B cell (primary cell): ENCODE measurements at regions of chr14 and their contacts with region 1.

Region 1: DNA sequence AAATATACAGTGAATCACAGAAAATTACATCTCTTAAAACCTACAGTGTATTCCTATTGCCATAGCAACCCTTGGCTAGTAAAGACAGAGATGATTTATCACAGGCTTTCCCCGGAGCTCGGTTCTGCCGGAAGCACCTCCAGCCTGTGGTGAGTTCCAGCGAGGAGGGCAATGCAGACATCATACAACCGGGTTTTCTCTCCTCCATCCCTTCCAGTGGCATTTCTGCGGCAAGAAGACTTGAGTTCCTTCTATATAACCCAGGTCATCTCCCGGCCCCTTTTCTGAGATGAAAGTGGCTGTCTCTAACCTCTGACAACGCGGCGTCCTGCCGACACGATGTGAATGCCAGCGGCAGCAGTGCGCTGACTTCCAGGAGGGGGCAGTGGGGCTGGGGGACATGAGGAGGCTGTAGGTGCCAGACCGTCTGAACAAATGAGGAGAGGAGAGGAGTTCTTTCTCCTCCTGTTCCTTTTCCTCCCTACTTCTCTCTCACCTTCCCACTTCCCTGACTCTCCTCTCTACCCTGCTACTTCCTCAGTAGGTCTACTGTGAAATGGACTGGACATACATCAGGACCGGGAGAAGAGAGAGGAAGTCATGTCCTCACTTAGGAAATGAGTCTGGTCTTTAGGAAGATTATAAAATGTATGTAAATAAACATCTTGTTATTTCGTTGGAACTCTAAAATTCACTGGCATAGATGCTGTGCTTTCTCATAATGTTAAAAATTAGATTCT is 68.6 kb upstream of the MAX start:
- DNase-seq: peak; percentile 72
- ATAC-seq: peak; percentile 50
- H3K4me3 ChIP-seq: peak overlapping the region; percentile 42 to 74 (median 64)
- H3K4me3 Mint-ChIP-seq: peak overlapping the region; percentile 86
- H3K27ac ChIP-seq: peak overlapping the region in 1 of 2 donors; percentile 23
- H3K27ac Mint-ChIP-seq: peak overlapping the region; percentile 88
- H3K4me1 ChIP-seq: peaks cover 14 to 35% of the 10 kb centered on the region in 2 donors
- H3K4me1 Mint-ChIP-seq: peaks cover 55% of the 10 kb centered on the region
- H3K27me3 ChIP-seq: no peaks in the 10 kb centered on the region
- H3K27me3 Mint-ChIP-seq: no peaks in the 10 kb centered on the region
- CTCF ChIP-seq: peak; percentile 40

Region 2: DNA sequence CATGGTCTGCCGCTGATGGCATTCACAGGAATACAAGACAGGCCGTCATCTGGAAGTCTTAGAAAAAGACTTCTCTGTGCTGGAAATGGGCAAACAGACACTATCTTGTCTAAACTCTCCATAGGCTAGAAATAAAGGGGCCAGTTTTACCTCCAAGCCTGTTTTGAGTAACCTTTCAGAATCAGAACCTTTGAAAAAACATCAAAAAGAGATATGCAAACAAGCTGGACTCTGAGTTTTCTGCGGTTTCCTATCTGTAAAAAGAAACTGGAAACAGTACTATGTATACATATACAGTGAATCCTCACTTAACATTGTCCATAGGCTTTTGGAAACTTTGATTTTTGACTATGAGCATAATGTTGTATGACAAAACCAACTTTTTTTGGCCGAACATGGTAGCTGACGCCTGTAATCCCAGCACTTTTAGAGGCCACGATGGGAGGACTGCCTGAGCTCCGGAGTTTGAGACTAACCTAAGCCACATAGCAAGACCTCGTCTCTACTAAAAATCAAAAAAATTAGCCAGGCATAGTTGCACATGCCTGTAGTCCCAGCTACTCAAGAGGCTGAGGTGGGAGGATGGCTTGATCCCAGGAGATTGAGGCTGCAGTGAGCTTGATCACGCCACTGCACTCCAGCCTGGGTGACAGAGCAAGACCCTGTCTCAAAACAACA is 24.2 kb after region 1 on chr14:
- CTCF ChIA-PET with region 1: interaction called, 8 read pairs
- POLR2A ChIA-PET with region 1: interaction called, 4 read pairs
- intact Hi-C with region 1: loop called (anchors 2 kb)
- DNase-seq: peak; percentile 36
- ATAC-seq: peak; percentile 76
- H3K4me3 ChIP-seq: peak overlapping the region in 4 of 5 experiments; percentile 0 to 42 (median 28)
- H3K4me3 Mint-ChIP-seq: peak overlapping the region; percentile 84
- H3K27ac ChIP-seq: peak overlapping the region; percentile 29 to 35
- H3K27ac Mint-ChIP-seq: peak overlapping the region; percentile 91
- H3K4me1 ChIP-seq: peaks cover 19 to 23% of the 10 kb centered on the region in 2 donors
- H3K4me1 Mint-ChIP-seq: peaks cover 44% of the 10 kb centered on the region
- H3K27me3 ChIP-seq: no peaks in the 10 kb centered on the region
- H3K27me3 Mint-ChIP-seq: no peaks in the 10 kb centered on the region
- CTCF ChIP-seq: no peak

Region 3: GRCh38 chr14:65222440-65222858 is 51.5 kb after region 1 on chr14:
- CTCF ChIA-PET with region 1: interaction called, 15 read pairs
- POLR2A ChIA-PET with region 1: no interaction called
- intact Hi-C with region 1: no loop called
- DNase-seq: peak; percentile 72
- ATAC-seq: peak; percentile 89
- H3K4me3 ChIP-seq: no peak overlapping the region
- H3K4me3 Mint-ChIP-seq: no peak overlapping the region
- H3K27ac ChIP-seq: no peak overlapping the region
- H3K27ac Mint-ChIP-seq: peak overlapping the region; percentile 39
- H3K4me1 ChIP-seq: peaks cover 42 to 56% of the 10 kb centered on the region in 2 donors
- H3K4me1 Mint-ChIP-seq: peaks cover 49% of the 10 kb centered on the region
- H3K27me3 ChIP-seq: no peaks in the 10 kb centered on the region
- H3K27me3 Mint-ChIP-seq: no peaks in the 10 kb centered on the region
- CTCF ChIP-seq: peak; percentile 87

Region 4: GRCh38 chr14:65709576-65709975 is 538.6 kb after region 1 on chr14:
- CTCF ChIA-PET with region 1: no interaction called
- POLR2A ChIA-PET with region 1: interaction called, 13 read pairs
- intact Hi-C with region 1: no loop called
- DNase-seq: no peak
- ATAC-seq: no peak
- H3K4me3 ChIP-seq: no peak overlapping the region
- H3K4me3 Mint-ChIP-seq: no peak overlapping the region
- H3K27ac ChIP-seq: no peak overlapping the region
- H3K27ac Mint-ChIP-seq: no peak overlapping the region
- H3K4me1 ChIP-seq: no peaks in the 10 kb centered on the region
- H3K4me1 Mint-ChIP-seq: peaks cover 5% of the 10 kb centered on the region
- H3K27me3 ChIP-seq: no peaks in the 10 kb centered on the region
- H3K27me3 Mint-ChIP-seq: no peaks in the 10 kb centered on the region
- CTCF ChIP-seq: no peak

Region 5: DNA sequence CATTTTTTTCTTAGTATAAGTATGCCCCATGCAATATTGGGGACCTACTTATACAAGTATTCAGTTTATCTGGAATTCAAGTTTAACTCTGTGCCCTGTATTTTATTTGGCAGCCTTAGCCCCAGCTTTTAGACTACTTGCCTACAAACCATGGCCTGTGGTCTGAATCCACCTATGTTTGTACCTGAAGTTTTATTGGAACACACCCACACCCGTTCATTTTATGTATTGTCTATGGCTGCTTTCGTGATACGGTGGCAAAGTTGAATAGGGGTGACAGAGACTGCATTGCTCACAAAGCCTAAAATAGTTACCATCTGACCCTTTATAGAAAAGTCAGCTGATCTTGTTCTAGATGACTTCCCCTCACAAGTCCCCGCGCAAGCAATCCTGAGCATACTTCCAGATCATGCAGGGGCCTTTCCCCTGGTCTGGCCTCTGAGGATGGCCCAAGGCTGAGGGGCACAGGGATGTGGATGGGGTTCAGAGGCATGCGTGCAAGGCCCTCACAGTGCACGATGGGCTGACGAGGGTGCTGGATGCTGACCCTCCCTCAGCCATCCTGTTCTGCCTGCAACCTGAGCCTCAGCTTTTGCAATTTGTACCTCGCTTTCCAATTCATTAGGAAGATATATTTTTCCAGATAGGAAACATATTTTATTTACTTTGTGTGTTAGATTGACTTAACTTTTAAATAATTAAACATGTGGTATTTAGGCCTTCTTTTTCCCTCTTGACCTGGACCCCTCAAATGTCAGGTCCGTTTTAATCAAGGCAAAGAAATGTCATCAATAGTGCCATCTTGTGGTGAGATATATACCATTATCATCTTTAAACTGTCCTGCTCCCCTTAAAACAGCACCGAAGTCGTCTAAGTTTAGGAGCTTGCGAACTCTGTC is 788.0 kb after region 1 on chr14:
- CTCF ChIA-PET with region 1: interaction called, 69 read pairs
- POLR2A ChIA-PET with region 1: no interaction called
- intact Hi-C with region 1: no loop called
- DNase-seq: peak; percentile 60
- ATAC-seq: peak; percentile 41
- H3K4me3 ChIP-seq: no peak overlapping the region
- H3K4me3 Mint-ChIP-seq: no peak overlapping the region
- H3K27ac ChIP-seq: no peak overlapping the region
- H3K27ac Mint-ChIP-seq: no peak overlapping the region
- H3K4me1 ChIP-seq: no peaks in the 10 kb centered on the region
- H3K4me1 Mint-ChIP-seq: no peaks in the 10 kb centered on the region
- H3K27me3 ChIP-seq: peaks cover 0 to 15% (median 7%) of the 10 kb centered on the region in 4 experiments
- H3K27me3 Mint-ChIP-seq: peaks cover 30% of the 10 kb centered on the region
- CTCF ChIP-seq: peak; percentile 74